ENCODE measurements at regions of chr10 and their contacts with region 1.

Region 1: GRCh38 chr10:48656241-48656913 is 28.3 kb upstream of the WDFY4 start:
- DNase-seq: peak; percentile 90 to 95 (median 93)
- H3K4me3 ChIP-seq: peak overlapping the region in 2 of 4 donors; percentile 30 to 56
- H3K27ac ChIP-seq: peak overlapping the region in 3 of 5 donors; percentile 61 to 78 (median 72)
- H3K4me1 ChIP-seq: peaks cover 0 to 16% of the 10 kb centered on the region in 2 donors
- H3K27me3 ChIP-seq: no peaks in the 10 kb centered on the region
- CTCF ChIP-seq: peak; percentile 49 to 100 (median 84)
- POLR2A ChIP-seq: no peak

Region 2: DNA sequence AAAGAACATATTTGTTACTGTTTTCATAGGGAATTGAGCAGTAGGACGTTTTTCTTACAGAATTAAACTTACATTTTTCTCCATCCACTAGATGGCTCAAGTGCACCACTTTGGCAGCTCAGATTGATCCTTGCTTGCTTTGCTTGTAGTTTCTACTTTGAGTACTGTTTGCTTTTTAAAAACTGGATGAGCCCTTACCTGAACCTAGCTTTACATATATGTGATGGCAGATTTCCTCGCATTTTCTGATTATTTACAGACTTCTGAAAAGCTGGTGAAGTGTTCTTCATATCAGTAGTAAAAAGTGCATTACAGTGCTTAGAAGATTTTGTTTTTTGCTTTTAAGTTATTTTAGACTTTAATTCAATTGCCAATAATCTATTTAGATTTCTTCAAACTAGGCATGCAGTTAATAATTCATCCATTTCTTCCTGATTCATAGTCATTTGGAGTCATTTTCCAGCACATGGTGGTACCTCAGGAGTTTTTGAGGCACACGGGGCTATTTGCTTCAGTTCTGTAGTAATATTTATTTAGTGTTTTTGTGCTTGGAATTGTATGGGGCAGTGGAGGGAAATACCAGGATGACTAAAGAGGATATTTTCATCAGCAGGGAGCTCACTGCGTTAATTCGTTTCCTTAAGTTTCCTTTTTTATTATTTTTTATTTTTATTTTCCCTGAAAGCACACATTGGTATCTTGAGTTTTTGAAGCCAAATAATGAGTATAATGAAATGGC is 292.6 kb before region 1 on chr10:
- intact Hi-C with region 1: loop called in 1 of 2 experiments (anchors 5 kb)
- DNase-seq: peak; percentile 18 to 67 (median 42)
- H3K4me3 ChIP-seq: no peak overlapping the region
- H3K27ac ChIP-seq: no peak overlapping the region
- H3K4me1 ChIP-seq: peaks cover 0 to 13% of the 10 kb centered on the region in 2 donors
- H3K27me3 ChIP-seq: no peaks in the 10 kb centered on the region
- CTCF ChIP-seq: peak; percentile 61 to 84 (median 77)
- POLR2A ChIP-seq: no peak

Region 3: DNA sequence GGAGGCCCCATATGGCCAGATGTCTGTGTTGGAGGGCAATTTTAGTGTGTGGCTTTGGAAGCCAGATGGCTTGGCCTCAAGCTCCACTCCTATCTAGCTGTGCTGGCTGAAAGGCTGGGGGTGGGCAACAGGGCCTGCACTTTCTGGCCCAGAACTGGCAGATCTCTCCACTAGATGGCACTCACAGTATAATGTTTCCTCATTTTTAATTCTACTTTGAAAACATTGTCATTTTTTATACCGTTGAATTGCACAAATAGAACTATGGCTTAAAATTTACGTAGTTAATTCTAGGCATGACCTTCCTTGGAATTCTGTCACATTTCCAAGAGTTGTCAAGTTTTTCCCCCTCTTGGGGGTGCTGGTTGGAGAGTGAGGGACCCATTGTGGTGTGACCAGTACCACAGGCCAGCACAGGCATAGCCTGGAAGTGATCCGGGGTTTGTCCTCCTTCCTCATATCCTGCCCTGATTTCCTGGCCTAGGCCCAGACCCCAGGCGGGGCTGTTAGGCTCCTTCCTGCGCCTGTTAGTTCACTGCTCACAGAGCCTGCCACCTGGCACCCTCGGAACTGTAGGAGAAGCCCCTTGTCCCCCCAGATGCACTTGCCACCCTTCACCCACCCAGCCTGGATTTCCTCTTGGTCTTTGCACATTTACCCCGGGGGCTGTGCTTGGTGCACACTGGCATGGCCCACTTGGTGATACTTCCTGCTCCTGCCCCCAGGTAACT is 104.4 kb before region 1 on chr10:
- intact Hi-C with region 1: loop called (anchors 5 kb)
- DNase-seq: peak; percentile 25 to 69 (median 32)
- H3K4me3 ChIP-seq: no peak overlapping the region
- H3K27ac ChIP-seq: no peak overlapping the region
- H3K4me1 ChIP-seq: no peaks in the 10 kb centered on the region
- H3K27me3 ChIP-seq: no peaks in the 10 kb centered on the region
- CTCF ChIP-seq: peak; percentile 51 to 77 (median 65)
- POLR2A ChIP-seq: no peak

Region 4: DNA sequence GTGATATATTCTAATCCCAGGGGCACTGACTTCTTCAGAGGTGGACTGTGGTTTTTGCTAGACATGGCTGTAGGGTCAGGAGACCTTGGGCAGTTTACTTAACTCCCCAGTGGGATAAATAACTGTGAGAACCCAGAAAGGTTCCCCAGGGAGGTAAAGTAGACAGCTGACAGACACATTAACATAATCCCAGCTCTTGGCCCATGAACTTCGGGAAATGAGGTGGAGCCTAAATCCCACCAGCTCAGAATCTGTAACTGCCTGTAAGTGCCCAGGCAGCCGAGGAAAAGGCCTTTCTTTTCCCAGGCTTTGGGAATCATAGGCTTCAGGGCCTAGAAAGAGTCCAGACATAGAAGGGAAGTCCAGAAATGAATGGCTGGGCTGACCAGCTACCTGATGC is 177.3 kb after region 1 on chr10:
- intact Hi-C with region 1: no loop called
- DNase-seq: no peak
- H3K4me3 ChIP-seq: no peak overlapping the region
- H3K27ac ChIP-seq: no peak overlapping the region
- H3K4me1 ChIP-seq: no peaks in the 10 kb centered on the region
- H3K27me3 ChIP-seq: no peaks in the 10 kb centered on the region
- CTCF ChIP-seq: no peak
- POLR2A ChIP-seq: no peak

Region 5: DNA sequence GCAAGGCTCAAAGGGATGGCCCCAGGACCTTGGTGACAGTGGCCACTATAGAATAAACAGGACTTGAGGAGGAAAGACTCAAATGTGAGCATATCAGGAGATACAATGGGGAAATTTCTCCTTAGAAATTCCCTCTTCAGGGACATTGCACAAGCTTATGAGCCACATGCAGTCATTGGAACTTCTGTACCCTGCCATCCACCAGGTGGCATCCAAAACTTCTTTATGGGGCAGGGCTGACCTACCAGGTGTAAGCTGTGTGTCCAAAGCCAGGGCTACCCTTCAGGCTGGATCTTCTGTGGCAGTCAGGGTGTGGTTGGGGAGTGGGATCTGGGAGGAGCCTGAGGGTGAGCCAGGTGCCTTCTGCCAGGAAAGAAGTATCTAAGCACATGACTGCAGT is 319.8 kb after region 1 on chr10:
- intact Hi-C with region 1: loop called in 1 of 2 experiments (anchors 5 kb)
- DNase-seq: peak; percentile 31 to 70 (median 49)
- H3K4me3 ChIP-seq: no peak overlapping the region
- H3K27ac ChIP-seq: no peak overlapping the region
- H3K4me1 ChIP-seq: no peaks in the 10 kb centered on the region
- H3K27me3 ChIP-seq: no peaks in the 10 kb centered on the region
- CTCF ChIP-seq: peak in 5 of 6 experiments; percentile 35 to 53 (median 37)
- POLR2A ChIP-seq: no peak

Region 6: DNA sequence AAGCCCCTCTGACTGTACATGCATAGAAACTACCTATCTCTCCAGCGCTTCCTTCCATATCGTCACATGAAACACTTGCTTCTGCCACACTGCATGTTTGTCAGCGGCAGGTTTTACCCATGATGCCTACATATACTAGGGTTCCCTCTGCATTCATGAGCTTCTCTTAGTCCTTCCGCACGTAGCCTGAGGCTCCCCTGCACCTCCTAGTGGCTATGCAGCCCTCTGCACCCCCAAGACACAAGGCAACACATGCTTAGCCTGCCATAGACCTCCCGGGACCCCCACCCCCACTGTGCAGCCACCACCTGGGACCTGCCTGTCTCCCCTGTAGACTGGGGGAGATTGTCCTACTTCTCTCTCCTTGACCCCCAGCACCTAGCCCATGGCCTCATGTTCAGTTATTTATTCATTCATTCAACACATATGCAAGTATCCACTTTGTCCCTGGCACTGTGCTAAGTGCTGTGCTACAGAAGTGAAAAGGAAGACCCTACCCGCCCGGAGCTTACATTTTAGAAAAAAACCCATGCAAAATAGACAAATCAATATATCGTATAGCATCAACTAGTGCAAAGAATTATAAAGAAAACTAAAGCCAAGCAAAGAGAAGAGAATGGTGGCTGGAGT is 508.3 kb after region 1 on chr10:
- intact Hi-C with region 1: loop called in 1 of 2 experiments (anchors 10 kb)
- DNase-seq: peak in 6 of 7 donors; percentile 36 to 70 (median 58)
- H3K4me3 ChIP-seq: no peak overlapping the region
- H3K27ac ChIP-seq: no peak overlapping the region
- H3K4me1 ChIP-seq: no peaks in the 10 kb centered on the region
- H3K27me3 ChIP-seq: no peaks in the 10 kb centered on the region
- CTCF ChIP-seq: peak; percentile 55 to 83 (median 80)
- POLR2A ChIP-seq: no peak